ENCODE measurements at regions of chr1 and their contacts with region 1.

Region 1: DNA sequence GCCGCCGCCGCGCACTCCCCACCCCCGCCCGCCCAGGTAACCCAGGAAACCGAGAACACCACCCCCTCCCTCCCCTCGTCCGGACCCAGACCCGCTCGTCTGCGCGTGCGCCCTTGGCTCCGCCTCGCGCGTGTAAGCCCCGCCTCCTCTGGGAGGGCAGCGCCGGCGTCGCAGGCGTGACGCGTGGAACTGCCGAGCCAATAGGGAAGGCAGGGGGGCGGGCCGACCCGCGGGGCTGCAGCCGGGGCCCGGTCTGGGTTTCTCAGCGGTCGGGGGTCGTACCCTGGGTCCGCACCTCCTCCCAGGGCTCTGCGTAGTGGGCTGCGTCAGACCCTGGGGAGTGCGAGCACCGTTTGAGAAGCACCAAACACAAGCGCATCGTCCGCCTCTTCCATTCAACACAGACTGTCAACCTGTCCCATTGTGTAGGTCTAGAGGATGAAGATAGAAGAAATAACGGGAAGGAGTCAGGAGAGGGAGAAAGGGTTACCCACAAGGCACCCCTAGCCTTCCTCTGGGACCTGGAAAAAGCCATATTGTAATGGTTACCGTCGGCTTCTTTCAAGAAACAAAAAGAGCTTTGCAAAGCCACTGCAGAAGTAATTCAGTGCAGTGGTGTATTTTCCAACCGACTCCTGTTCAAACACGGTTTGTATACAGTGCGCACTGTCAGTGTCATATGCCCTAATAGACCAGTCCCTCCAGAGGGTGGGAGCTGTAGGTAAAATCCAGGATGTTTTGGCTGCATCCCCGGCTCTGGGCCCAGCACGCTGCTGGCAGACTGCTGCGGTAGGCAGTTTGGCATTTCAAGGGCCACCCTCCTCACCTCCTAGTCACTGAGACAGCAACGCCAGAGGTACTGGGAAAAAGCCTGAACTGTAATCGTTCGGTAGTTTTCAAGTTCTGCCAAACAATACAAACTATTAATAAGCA is 473 bp upstream of the LYST start:
- DNase-seq: peak; percentile 87
- ATAC-seq: peak; percentile 78
- H3K4me3 ChIP-seq: peak overlapping the region; percentile 91
- H3K27ac ChIP-seq: peak overlapping the region; percentile 88
- H3K4me1 ChIP-seq: peaks cover 5% of the 10 kb centered on the region; the same call in 1 of the 2 replicates
- H3K27me3 ChIP-seq: no peaks in the 10 kb centered on the region
- CTCF ChIP-seq: no peak
- EP300 ChIP-seq: no peak
- POLR2A ChIP-seq: peak; percentile 88
- RAD21 ChIP-seq: no peak

Region 2: GRCh38 chr1:235855811-235856429 is 11.3 kb before region 1 on chr1:
- CTCF ChIA-PET with region 1: interaction called, 8 read pairs
- POLR2A ChIA-PET with region 1: interaction called, 7 read pairs
- RAD21 ChIA-PET with region 1: interaction called, 14 read pairs
- SMC1A ChIA-PET with region 1: interaction called, 12 read pairs
- in situ Hi-C with region 1: no loop called
- intact Hi-C with region 1: no loop called
- DNase-seq: no peak
- ATAC-seq: peak; percentile 86
- H3K4me3 ChIP-seq: no peak overlapping the region
- H3K27ac ChIP-seq: no peak overlapping the region
- H3K4me1 ChIP-seq: peaks cover 7% of the 10 kb centered on the region; the same call in 1 of the 2 replicates
- H3K27me3 ChIP-seq: no peaks in the 10 kb centered on the region
- CTCF ChIP-seq: no peak
- EP300 ChIP-seq: peak in 1 of 2 experiments; percentile 22; a peak in 2 of 4 replicates
- POLR2A ChIP-seq: no peak
- RAD21 ChIP-seq: no peak

Region 3: GRCh38 chr1:235910357-235911299 is 43.4 kb after region 1 on chr1:
- CTCF ChIA-PET with region 1: interaction called, 8 read pairs
- POLR2A ChIA-PET with region 1: interaction called, 11 read pairs
- RAD21 ChIA-PET with region 1: interaction called, 4 read pairs
- SMC1A ChIA-PET with region 1: interaction called, 3 read pairs
- in situ Hi-C with region 1: no loop called
- intact Hi-C with region 1: no loop called
- DNase-seq: no peak
- ATAC-seq: peak; percentile 78
- H3K4me3 ChIP-seq: no peak overlapping the region
- H3K27ac ChIP-seq: no peak overlapping the region
- H3K4me1 ChIP-seq: peaks cover 4% of the 10 kb centered on the region; the same call in 1 of the 2 replicates
- H3K27me3 ChIP-seq: no peaks in the 10 kb centered on the region
- CTCF ChIP-seq: no peak
- EP300 ChIP-seq: no peak; a peak in 1 of 4 replicates
- POLR2A ChIP-seq: no peak
- RAD21 ChIP-seq: no peak

Region 4: DNA sequence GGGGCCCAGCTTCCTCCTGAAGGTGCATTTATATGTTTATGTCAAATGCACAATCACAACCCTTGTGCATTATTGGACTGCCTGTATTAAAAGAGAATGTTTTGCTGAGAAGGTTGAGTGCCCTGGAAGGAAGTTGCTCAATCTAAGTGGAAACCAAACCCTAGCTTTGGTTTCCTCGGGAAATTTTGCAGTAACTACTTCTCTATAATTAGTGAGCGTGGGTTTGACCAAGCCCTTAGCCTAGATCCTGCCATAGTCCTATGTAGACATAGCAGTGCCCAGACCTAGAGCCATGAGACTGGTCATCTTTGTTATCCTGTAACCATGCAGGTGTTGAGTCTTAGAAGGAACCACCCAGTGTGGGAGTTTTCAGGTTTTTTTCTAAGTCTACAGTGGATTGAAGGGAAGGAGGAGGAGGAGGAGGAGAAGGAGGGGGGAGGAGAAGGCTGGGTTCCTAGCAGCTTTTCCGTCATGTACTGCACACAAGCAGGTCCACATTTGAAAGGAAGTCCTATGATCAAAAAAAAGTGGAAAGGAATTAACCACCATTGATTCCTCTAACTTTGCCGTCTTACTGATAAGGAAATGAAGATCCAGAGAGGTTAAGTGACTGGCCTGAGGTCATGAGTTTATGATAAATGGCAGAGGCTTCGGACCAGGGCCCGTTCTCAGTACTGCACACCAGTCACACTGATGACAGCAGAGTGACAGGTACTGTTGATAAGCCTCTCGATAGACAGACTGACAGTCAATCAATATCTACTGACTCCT is 71.7 kb after region 1 on chr1:
- CTCF ChIA-PET with region 1: interaction called, 13 read pairs
- POLR2A ChIA-PET with region 1: interaction called, 3 read pairs
- RAD21 ChIA-PET with region 1: interaction called, 14 read pairs
- SMC1A ChIA-PET with region 1: interaction called, 15 read pairs
- in situ Hi-C with region 1: no loop called
- intact Hi-C with region 1: no loop called
- DNase-seq: peak; percentile 43
- ATAC-seq: peak; percentile 88
- H3K4me3 ChIP-seq: no peak overlapping the region; the same call in 1 of the 2 replicates
- H3K27ac ChIP-seq: peak overlapping the region; percentile 35
- H3K4me1 ChIP-seq: peaks cover 20% of the 10 kb centered on the region
- H3K27me3 ChIP-seq: no peaks in the 10 kb centered on the region
- CTCF ChIP-seq: no peak
- EP300 ChIP-seq: no peak
- POLR2A ChIP-seq: no peak
- RAD21 ChIP-seq: no peak

Region 5: GRCh38 chr1:235999259-235999925 is 132.2 kb after region 1 on chr1:
- CTCF ChIA-PET with region 1: interaction called, 3 read pairs
- POLR2A ChIA-PET with region 1: no interaction called
- RAD21 ChIA-PET with region 1: interaction called, 4 read pairs
- SMC1A ChIA-PET with region 1: no interaction called
- in situ Hi-C with region 1: no loop called
- intact Hi-C with region 1: loop called (anchors 2 kb)
- DNase-seq: peak; percentile 96
- ATAC-seq: peak; percentile 81
- H3K4me3 ChIP-seq: peak overlapping the region; percentile 46; the same call in 1 of the 2 replicates
- H3K27ac ChIP-seq: peak overlapping the region; percentile 97
- H3K4me1 ChIP-seq: peaks cover 58% of the 10 kb centered on the region
- H3K27me3 ChIP-seq: no peaks in the 10 kb centered on the region
- CTCF ChIP-seq: no peak
- EP300 ChIP-seq: peak; percentile 92 to 94; a peak in 3 of 4 replicates
- POLR2A ChIP-seq: no peak; the same call in 1 of the 2 replicates
- RAD21 ChIP-seq: peak; percentile 15; the same call in 1 of the 2 replicates

Region 6: GRCh38 chr1:236281654-236282424 is 414.7 kb after region 1 on chr1 and contains the start of gene ERO1B:
- CTCF ChIA-PET with region 1: no interaction called
- POLR2A ChIA-PET with region 1: no interaction called
- RAD21 ChIA-PET with region 1: no interaction called
- SMC1A ChIA-PET with region 1: no interaction called
- in situ Hi-C with region 1: no loop called
- intact Hi-C with region 1: loop called (anchors 5 kb)
- DNase-seq: peak; percentile 73
- ATAC-seq: peak; percentile 86
- H3K4me3 ChIP-seq: peak within 1 kb of the TSS; percentile 85
- H3K27ac ChIP-seq: peak within 1 kb of the TSS; percentile 88
- H3K4me1 ChIP-seq: peaks cover 33% of the 10 kb centered on the region
- H3K27me3 ChIP-seq: no peaks in the 10 kb centered on the region
- CTCF ChIP-seq: no peak
- EP300 ChIP-seq: no peak
- POLR2A ChIP-seq: peak; percentile 99
- RAD21 ChIP-seq: no peak
- polyA plus RNA-seq, gene ERO1B: 9.0 to 9.6 TPM

Measured in GM12878 (cell line).